Activated T-helper 2 cell treated with anti-CD3 and anti-CD28 coated beads, Interferon-gamma antibody, Interleukin-2, Interleukin-4, amounts not matched to agents 10 μg/mL and 5 μg/mL and 100 μg/mL, durations not matched to agents 14 hours and 24 hours and 36 hours (primary cell): ENCODE measurements at regions of chrX and their contacts with region 1.

Region 1: DNA sequence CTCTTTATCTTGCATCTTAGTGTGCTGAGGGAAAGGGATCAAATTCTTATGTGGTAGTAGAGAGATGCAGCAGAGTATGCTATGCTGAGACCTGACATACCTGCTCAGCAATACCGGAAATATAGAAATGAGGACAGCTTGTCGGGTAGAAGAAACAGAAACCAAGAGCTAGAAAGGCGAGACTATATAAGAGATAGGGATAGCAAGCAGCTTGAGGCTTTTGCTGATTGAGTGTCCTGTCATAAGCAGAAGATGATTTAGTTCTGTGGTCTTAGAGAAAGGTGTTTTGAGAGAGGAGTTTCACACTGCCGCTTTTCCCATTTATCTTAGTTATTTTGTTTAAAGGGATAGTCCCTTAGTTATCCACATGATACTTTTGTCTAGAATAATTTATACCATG is 31.7 kb downstream of the USP9X start:
- DNase-seq: no peak
- H3K4me3 Mint-ChIP-seq: peak overlapping the region; percentile 21
- H3K27ac Mint-ChIP-seq: peak overlapping the region; percentile 63
- H3K4me1 Mint-ChIP-seq: peaks cover 48% of the 10 kb centered on the region
- H3K27me3 Mint-ChIP-seq: no peaks in the 10 kb centered on the region

Region 2: GRCh38 chrX:40647307-40648197 is 469.4 kb before region 1 on chrX and contains the start of gene CXorf38:
- intact Hi-C with region 1: loop called (anchors 10 kb)
- DNase-seq: peak; percentile 85
- H3K4me3 Mint-ChIP-seq: peak within 1 kb of the TSS; percentile 87
- H3K27ac Mint-ChIP-seq: peak within 1 kb of the TSS; percentile 87
- H3K4me1 Mint-ChIP-seq: peaks cover 17% of the 10 kb centered on the region
- H3K27me3 Mint-ChIP-seq: no peaks in the 10 kb centered on the region
- total RNA-seq, gene CXorf38: 19.5 TPM in 2 replicates

Region 3: GRCh38 chrX:40735325-40736169 is 381.4 kb before region 1 on chrX and contains the start of gene MED14:
- intact Hi-C with region 1: loop called (anchors 5 kb)
- DNase-seq: peak; percentile 83
- H3K4me3 Mint-ChIP-seq: peak within 1 kb of the TSS; percentile 82
- H3K27ac Mint-ChIP-seq: peak within 1 kb of the TSS; percentile 91
- H3K4me1 Mint-ChIP-seq: peaks cover 29% of the 10 kb centered on the region
- H3K27me3 Mint-ChIP-seq: no peaks in the 10 kb centered on the region
- total RNA-seq, gene MED14: 37.8 and 44.7 TPM in 2 replicates

Region 4: DNA sequence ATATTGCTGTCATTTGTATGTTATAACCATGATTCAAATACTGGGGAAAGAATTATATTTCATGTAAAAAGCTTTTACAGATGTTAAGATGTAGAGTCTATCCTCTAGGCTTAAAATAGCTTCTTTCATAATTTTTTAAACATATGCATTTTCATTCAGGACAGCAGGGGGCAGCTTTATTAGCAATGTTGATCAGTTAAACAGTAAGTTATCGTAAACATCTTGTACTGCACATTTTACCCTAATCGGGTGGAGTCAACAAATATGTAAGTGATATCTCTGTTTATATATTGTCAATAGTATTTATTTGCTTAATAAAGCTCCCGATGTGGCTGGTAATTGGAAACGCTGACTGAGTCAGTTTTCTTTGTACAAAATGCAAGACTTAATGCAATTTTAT is 239.1 kb before region 1 on chrX:
- intact Hi-C with region 1: loop called (anchors 1 kb)
- DNase-seq: no peak
- H3K4me3 Mint-ChIP-seq: no peak overlapping the region
- H3K27ac Mint-ChIP-seq: no peak overlapping the region
- H3K4me1 Mint-ChIP-seq: peaks cover 3% of the 10 kb centered on the region
- H3K27me3 Mint-ChIP-seq: no peaks in the 10 kb centered on the region

Region 5: GRCh38 chrX:40952855-40953254 is 164.1 kb before region 1 on chrX:
- intact Hi-C with region 1: loop called (anchors 5 kb)
- DNase-seq: peak; percentile 8
- H3K4me3 Mint-ChIP-seq: peak overlapping the region; percentile 5
- H3K27ac Mint-ChIP-seq: peak overlapping the region; percentile 66
- H3K4me1 Mint-ChIP-seq: peaks cover 14% of the 10 kb centered on the region
- H3K27me3 Mint-ChIP-seq: no peaks in the 10 kb centered on the region

Region 6: DNA sequence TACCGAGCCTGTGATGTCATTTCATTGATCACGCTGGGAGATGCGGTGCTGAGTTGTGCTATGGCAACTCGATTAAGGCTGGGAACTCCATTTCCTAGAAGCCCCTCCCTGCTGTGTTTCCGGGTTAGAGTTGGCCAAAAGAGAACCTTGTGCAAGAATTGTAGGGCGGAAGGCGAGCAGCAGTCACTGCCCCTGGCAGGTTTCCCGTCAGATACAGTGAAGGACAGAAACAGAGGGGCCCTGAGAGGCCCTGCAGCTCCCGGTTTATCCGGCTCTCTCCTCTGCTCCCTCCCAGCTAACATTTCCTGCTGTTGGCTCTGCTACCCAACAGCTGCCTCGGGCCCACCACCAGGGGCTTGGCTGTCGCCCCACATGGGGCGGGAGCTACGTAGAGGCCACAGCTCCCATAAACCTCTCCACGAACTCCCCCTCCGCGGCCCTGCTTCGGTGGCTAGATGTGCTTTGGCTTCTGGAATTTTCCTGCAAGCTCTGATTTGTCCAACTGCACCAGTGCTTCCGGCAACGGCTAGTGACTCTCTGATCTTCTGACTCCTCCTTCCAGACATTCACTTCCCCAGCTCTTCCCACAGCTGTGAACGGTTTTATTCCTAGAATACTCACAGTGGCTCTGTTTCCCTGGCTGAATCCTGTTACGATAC is 106.6 kb before region 1 on chrX:
- intact Hi-C with region 1: loop called (anchors 5 kb)
- DNase-seq: peak; percentile 52
- H3K4me3 Mint-ChIP-seq: peak overlapping the region; percentile 55
- H3K27ac Mint-ChIP-seq: peak overlapping the region; percentile 78
- H3K4me1 Mint-ChIP-seq: peaks cover 22% of the 10 kb centered on the region
- H3K27me3 Mint-ChIP-seq: peaks cover 15% of the 10 kb centered on the region

Region 7: GRCh38 chrX:41084044-41084892 is 32.7 kb before region 1 on chrX:
- intact Hi-C with region 1: loop called (anchors 1 kb)
- DNase-seq: peak; percentile 88
- H3K4me3 Mint-ChIP-seq: peak overlapping the region; percentile 89
- H3K27ac Mint-ChIP-seq: peak overlapping the region; percentile 99
- H3K4me1 Mint-ChIP-seq: peaks cover 18% of the 10 kb centered on the region
- H3K27me3 Mint-ChIP-seq: no peaks in the 10 kb centered on the region